Astrocyte of the cerebellum (primary cell): ENCODE measurements at regions of chr9 and their contacts with region 1.

Region 1: GRCh38 chr9:76458903-76459690 is at the start of gene GCNT1:
- DNase-seq: peak; percentile 49
- H3K4me3 ChIP-seq: peak within 1 kb of the TSS; percentile 98
- CTCF ChIP-seq: peak; percentile 53

Region 2: GRCh38 chr9:75866273-75866871 is 592.7 kb before region 1 on chr9:
- in situ Hi-C with region 1: no loop called
- DNase-seq: peak; percentile 61
- H3K4me3 ChIP-seq: no peak overlapping the region
- CTCF ChIP-seq: peak; percentile 69

Region 3: DNA sequence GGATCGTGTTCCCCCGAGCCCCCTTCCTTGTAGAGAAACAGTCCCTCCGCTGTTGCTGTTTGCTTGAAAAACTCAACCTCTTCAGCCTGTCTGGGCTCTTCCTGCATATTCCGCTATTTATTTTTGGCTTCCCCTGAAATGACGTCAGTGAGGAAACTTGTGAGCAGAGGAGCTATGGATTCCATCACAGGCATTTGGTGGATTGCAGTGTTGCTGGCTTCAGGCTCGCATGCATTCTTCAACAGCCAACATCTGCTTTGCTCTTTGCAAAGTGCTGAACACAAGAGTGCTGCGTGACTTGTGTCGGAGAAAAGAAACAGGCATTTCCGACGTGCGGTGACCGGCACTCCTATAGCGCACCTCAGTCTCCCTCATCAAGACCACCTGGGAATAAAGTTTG is 297.6 kb before region 1 on chr9:
- in situ Hi-C with region 1: loop called (anchors 10 kb)
- DNase-seq: peak; percentile 65
- H3K4me3 ChIP-seq: no peak overlapping the region
- CTCF ChIP-seq: no peak

Region 4: DNA sequence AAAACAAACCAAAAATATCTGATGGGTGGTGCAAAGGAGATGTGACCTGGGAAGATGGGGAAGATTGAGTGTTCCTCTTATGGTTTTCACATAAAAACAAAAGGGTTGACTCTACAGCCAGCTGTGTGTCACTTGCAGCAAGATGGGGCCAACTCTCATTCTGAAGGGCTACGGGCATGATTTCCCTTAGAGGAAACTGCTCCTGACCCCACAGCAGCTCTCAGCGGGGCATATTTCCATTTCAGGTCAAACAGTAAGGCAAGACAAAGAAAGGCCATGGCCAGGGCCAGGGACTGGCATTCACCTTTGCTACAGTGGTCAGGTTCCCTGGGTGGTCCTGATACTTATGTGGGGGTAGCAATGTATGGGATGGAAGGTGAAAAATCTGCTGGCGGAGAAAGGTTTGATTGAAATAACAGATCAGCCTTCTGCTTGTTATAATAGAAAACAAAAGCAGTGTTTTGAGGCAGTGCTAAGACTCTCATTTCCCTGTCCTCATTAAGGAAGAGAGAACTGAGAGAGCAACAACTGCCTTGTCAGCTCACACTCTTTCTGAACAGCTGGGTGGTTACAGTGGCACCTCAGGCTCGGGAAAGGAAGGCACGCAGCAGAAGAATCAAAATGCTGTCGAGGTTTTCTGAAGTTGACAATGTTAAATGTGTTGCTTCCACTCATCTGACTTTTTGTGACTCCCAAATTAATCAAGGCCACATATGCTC is 184.5 kb after region 1 on chr9:
- in situ Hi-C with region 1: loop called (anchors 10 kb)
- DNase-seq: no peak
- H3K4me3 ChIP-seq: no peak overlapping the region
- CTCF ChIP-seq: no peak

Region 5: DNA sequence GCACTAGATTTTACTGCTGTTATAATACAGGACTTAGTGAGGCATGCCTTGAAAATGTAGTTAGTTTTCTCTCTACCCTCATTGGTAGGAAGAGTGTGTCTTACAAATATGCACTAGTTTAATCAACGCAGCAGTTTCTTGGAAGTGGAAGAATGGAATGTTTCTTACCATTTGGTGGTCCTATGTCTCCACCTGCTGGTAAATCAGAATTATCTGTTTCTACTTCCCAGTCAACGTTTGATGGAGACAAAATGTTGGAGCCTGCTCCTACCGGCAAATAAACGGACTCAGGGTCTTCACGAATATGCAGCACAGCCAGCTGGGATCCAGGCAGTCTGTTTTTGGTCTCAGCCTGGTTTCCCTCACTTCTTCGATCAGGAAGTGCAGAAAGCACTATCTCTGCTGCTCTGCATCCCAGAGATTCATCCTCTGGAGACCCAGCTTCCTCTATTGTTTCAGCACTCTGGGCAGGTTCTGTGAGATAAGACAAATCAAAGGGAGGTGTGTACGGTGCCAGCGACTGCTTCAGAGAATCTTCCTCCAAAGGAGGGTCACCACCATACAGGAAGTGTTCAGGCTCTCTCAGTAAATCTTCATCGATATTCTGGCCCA is 245.6 kb after region 1 on chr9:
- in situ Hi-C with region 1: loop called (anchors 10 kb)
- DNase-seq: peak; percentile 94
- H3K4me3 ChIP-seq: no peak overlapping the region
- CTCF ChIP-seq: peak; percentile 44